Posterior cingulate gyrus (tissue), 11 donors: ENCODE measurements at regions of chr4 and their contacts with region 1.

Region 1: DNA sequence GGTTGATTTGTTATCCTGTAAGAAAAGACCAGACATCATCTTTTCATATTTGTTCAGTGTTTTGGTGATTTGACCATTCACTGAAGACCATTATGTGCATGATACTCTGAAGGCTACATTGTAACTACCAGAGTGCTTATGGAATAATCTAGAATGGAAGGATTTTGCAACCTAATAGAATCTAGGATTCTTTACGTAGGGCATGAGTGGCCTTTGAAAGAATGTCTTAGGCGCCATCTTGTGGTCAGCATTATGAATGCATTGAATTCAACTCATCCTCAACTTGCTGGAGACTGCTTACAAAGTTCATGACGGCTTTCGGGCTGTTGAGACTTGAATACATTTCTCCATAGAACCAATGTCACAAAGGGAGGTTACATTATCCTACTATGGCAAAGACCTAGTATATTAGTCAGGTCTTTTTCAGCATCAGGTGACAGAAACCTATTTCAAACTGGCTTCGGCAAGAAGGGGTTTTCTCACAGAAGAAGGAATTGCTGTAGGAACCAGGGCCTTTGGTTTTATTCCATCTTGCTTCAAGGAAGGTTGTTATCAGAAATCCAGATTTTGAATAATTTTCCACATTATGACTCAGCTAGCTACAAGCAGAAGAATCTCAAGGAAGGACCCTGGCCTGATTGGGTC is 104.1 kb downstream of the GPAT3 start:
- DNase-seq: peak in 3 of 10 donors; percentile 28 to 46 (median 36)

Region 2: GRCh38 chr4:83490876-83491450 is 149.0 kb before region 1 on chr4:
- intact Hi-C with region 1: loop called (anchors 5 kb)
- DNase-seq: no peak

Region 3: GRCh38 chr4:83503974-83504373 is 136.0 kb before region 1 on chr4:
- intact Hi-C with region 1: loop called (anchors 1 kb)
- DNase-seq: no peak

Region 4: DNA sequence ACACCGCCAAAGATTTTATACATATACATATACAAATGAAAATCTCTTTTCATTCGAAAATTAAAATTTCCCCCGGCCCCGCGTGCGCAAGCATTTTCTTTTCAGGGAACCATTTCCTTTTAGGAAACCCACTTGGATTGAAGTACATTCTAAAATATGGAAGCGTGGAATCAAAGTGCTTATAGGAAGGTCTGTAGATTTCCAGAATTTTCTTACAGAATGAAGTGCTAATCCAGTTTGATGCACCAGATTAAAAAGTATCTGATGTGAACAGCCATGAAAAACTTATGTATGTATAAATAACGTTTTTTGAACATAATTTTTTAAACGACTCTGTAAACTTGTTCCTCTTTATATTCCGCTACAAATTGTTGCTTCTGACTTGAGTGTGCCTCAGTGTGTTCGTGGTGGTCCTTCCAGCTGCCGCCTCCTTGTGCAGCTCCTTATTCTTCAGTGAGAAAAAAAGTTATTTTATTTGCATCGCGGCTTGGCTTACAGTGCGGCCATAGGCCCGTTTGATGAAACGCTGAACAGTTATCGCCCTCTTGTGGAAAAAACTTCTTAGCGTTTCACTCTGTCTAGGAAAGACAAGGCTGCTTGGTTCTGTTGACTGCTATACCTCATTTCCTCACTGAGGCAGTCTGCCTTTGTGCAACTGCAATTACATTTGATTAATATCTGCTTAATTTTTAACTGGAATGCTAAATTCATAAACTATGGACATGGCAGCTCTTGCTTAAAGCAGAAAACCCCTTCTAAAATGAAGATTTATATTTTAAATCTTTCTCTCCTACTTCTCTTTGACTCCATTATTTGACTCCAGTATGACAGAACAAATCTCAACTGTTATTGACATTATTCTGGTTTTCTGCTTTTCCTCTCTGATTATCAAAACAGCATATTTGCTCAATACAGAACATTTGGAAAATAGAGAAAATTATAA is 863.8 kb after region 1 on chr4:
- intact Hi-C with region 1: loop called (anchors 10 kb)
- DNase-seq: peak in 1 of 10 donors; percentile 84